ENCODE measurements at regions of chr15 and their contacts with region 1.

Region 1: DNA sequence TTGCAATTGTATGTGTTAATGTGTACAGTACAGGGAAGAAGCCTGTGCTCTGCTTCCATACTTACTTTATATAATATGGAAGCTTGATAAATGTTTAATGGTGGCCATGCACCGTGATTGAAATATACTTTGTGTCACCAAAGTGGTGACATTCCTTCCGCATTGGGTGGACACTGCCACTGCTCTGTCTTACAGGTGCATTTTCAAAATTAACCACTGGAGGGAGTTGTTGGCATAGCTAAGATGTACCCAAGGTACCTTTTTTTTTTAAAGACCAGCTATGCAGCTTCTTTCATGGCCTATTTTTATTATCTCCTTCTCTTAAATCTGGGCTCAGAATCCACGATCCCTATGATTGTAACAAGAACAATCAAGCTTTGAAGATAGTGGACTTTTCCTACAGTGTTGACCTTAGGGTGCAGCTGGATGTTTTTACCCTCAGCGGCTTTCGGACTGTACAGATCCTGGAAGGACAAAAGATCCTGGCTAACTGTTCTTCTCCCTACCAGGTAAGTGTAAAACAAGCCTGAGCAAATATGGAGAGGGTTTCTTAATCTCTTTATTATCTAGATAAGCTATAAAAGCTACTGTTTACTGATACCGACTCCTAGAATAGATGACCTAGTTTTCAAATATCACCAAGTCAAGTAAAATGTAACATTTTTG is 21.6 kb upstream of the PAK6 start:
- DNase-seq: peak in 1 of 5 donors; percentile 35
- H3K4me3 ChIP-seq: no peak overlapping the region
- H3K27ac ChIP-seq: no peak overlapping the region
- H3K4me1 ChIP-seq: no peaks in the 10 kb centered on the region
- H3K27me3 ChIP-seq: no peaks in the 10 kb centered on the region
- CTCF ChIP-seq: peak; percentile 60 to 80 (median 67)
- EP300 ChIP-seq: no peak
- POLR2A ChIP-seq: no peak

Region 2: DNA sequence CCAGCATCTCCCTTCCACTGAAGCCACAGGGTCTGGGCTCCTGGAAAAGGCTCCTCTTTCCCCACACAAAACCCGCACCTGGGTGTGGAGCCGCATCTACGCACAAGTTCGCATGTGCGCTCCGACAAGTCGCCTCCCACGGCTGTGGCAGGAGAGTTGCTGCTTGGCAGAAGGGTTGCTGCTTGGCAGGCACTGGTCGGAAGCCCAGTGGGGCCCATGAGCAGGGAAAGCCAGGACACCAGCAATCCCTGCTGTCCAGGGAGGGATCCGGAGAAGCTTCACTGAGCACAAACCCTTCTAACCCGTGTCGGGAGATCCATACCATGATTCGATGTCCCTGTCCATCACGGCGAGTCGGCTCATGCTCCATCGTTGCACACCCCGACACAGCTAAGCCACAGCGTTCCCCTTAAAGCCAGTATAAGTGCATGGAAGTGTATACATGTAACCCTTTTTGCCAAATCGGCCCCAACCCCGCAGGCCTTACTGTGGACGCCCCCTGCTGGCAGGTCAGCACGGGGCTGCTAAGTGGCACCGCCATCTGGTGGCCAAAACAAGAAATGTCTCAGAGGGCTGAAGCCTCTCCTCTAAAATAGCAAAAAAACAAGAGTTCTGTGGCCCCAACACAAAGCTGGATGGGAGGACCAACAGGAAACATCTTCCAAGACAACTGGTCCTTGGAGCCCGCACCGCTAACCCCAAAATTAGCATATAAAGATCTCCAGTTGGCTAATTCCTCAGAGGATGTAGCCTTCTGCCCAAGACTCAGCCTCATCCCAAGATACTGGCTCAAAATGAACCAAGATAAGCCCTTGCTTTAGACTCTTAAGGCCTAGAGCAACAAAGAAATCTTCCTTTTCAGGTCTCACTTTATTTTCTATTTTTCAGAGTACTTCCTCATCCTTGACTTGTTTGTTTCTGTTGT is 57.3 kb after region 1 on chr15:
- intact Hi-C with region 1: loop called (anchors 2 to 5 kb)
- DNase-seq: peak; percentile 70 to 87 (median 84)
- H3K4me3 ChIP-seq: no peak overlapping the region
- H3K27ac ChIP-seq: no peak overlapping the region
- H3K4me1 ChIP-seq: peaks cover 3% of the 10 kb centered on the region
- H3K27me3 ChIP-seq: no peaks in the 10 kb centered on the region
- CTCF ChIP-seq: peak; percentile 99 to 100 (median 99)
- EP300 ChIP-seq: no peak
- POLR2A ChIP-seq: peak; percentile 12

Measured in ovary (tissue), 10 donors.